Spleen (tissue), 13 donors: ENCODE measurements at regions of chr4 and their contacts with region 1.

Region 1: GRCh38 chr4:40056716-40057585 is at the start of gene N4BP2:
- DNase-seq: peak; percentile 96
- H3K4me3 ChIP-seq: peak within 1 kb of the TSS; percentile 69 to 94 (median 78)
- H3K27ac ChIP-seq: peak within 1 kb of the TSS; percentile 97 to 100 (median 99)
- H3K4me1 ChIP-seq: peaks cover 14 to 44% (median 29%) of the 10 kb centered on the region in 6 donors
- H3K27me3 ChIP-seq: no peaks in the 10 kb centered on the region
- CTCF ChIP-seq: peak in 9 of 11 experiments; percentile 42 to 90 (median 85)
- POLR2A ChIP-seq: peak; percentile 47 to 88 (median 73)
- total RNA-seq, gene N4BP2: 7.7 to 18.7 (median 15.1) TPM

Region 2: DNA sequence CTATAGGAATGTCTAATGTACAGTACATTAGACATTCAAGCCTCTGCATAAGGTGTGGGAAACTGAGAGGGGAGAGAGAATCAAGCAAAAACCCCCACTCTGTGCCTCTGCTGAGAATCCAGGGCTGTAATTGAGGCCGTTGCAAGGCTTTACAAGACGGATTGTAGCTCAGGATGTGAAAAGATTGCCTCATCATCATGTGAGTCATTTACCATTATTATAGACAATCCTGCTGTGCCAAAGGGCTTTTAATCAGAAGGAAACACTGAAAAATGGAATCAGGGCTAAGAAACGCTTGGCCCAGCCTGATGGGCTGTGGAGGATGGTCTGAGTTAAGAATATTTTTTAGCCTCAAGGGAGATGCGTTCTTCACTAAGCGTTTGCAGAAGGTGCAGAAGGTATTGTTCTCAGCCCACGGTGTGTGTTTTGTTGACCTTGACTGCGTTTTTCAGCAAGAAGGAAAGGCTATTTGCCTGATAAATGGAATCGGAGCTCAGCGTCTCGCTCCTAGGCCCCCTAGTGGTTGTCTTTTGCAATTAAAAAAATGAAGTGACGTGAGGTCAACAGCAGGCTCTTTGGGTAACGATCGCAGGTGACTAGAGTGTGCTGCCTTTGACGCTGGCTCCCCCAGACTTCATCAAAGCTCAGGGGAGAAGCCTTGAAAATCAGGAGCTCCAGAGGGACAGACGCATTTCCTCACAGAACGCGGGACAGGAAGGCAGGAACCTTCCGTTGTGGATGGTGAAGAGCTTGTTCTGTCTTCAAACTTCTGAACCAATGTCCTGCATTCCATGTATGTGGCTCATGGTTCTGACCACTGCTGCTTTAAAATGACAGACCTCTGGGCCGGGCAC is 260.1 kb after region 1 on chr4:
- intact Hi-C with region 1: loop called (anchors 10 kb)
- DNase-seq: no peak
- H3K4me3 ChIP-seq: peak overlapping the region in 7 of 8 donors; percentile 6 to 61 (median 21)
- H3K27ac ChIP-seq: peak overlapping the region in 7 of 8 donors; percentile 59 to 79 (median 74)
- H3K4me1 ChIP-seq: peaks cover 6 to 27% (median 20%) of the 10 kb centered on the region in 6 donors
- H3K27me3 ChIP-seq: no peaks in the 10 kb centered on the region
- CTCF ChIP-seq: peak; percentile 58 to 85 (median 78)
- POLR2A ChIP-seq: no peak